Posterior vena cava (tissue), 2 donors: ENCODE measurements at regions of chr1 and their contacts with region 1.

Region 1: DNA sequence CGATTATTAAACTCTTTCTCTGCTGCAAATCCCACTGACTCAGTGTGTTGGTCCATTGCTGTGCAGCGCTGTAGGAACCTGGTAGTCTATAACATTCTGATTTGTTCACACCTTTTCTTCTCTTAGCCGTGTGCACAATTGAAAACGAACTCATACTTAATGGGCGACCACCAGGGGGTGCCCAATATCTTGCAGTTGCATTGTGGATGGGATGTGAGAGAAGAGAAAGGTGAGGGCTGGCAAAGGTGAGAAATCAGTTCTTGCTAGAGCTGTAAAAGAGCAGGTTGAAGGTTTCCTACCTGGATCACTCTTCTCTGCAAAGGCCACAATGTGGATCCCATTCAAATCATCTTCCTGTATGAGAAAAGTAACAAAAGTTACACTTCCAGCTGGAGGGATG is 51.0 kb downstream of the CASQ2 start:
- DNase-seq: no peak

Region 2: DNA sequence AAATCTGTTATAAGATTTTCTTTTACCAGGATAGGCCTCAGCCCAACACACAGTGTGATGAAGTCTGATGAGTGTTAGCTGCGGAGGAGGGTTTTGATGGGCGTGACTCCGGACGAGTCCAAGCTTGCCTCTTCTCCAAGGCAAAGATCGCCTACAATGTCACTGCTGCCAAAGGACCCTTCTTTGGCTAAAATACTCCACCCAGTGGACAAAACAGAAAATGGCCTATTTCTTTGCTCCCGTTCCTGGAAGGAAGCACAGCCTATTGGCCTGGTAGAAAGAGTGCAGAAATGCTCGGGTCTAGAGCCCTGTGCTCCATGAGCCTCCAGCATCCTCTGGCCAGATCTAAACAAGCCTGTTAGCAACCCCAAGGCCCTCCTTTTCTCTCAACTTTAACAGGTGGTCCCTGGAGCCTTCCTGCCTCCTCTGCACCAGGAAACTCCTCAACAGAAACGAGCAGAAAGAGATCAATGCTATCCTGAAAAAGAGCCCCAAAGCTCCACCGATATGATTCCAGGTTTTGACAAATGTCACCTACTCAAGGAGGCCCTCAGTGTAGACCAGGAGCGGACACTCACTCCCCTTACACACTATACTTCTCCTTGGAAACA is 54.4 kb after region 1 on chr1:
- intact Hi-C with region 1: loop called (anchors 2 to 5 kb)
- DNase-seq: peak; percentile 88